ENCODE measurements at regions of chr10 and their contacts with region 1.

Region 1: GRCh38 chr10:6014241-6014761 is 37.0 kb upstream of the IL15RA start:
- DNase-seq: peak; percentile 28 to 88 (median 73)
- ATAC-seq: peak; percentile 99
- H3K4me3 ChIP-seq: no peak overlapping the region
- H3K4me3 Mint-ChIP-seq: peak overlapping the region; percentile 17
- H3K27ac ChIP-seq: peak overlapping the region; percentile 23 to 76
- H3K27ac Mint-ChIP-seq: peak overlapping the region; percentile 96
- H3K4me1 ChIP-seq: peaks cover 13% of the 10 kb centered on the region
- H3K4me1 Mint-ChIP-seq: peaks cover 14% of the 10 kb centered on the region
- H3K27me3 ChIP-seq: no peaks in the 10 kb centered on the region
- H3K27me3 Mint-ChIP-seq: no peaks in the 10 kb centered on the region
- CTCF ChIP-seq: peak; percentile 84

Region 2: GRCh38 chr10:5977471-5978229 is 36.7 kb before region 1 on chr10 and contains the start of gene IL15RA:
- CTCF ChIA-PET with region 1: interaction called, 5 read pairs
- POLR2A ChIA-PET with region 1: interaction called, 3 read pairs
- intact Hi-C with region 1: loop called in 1 of 2 experiments (anchors 2 kb)
- DNase-seq: peak; percentile 54 to 91 (median 84)
- ATAC-seq: peak; percentile 78
- H3K4me3 ChIP-seq: peak within 1 kb of the TSS; percentile 92 to 95
- H3K4me3 Mint-ChIP-seq: peak within 1 kb of the TSS; percentile 97
- H3K27ac ChIP-seq: peak within 1 kb of the TSS; percentile 77 to 82
- H3K27ac Mint-ChIP-seq: peak within 1 kb of the TSS; percentile 96
- H3K4me1 ChIP-seq: peaks cover 12% of the 10 kb centered on the region
- H3K4me1 Mint-ChIP-seq: peaks cover 24% of the 10 kb centered on the region
- H3K27me3 ChIP-seq: no peaks in the 10 kb centered on the region
- H3K27me3 Mint-ChIP-seq: no peaks in the 10 kb centered on the region
- CTCF ChIP-seq: no peak
- total RNA-seq, gene IL15RA: 4.8 to 5.4 TPM

Region 3: GRCh38 chr10:6045314-6045848 is 31.1 kb after region 1 on chr10:
- CTCF ChIA-PET with region 1: interaction called, 78 read pairs
- POLR2A ChIA-PET with region 1: interaction called, 10 read pairs
- intact Hi-C with region 1: loop called in 1 of 2 experiments (anchors 1 kb)
- DNase-seq: peak in 2 of 9 experiments; percentile 43 to 45
- ATAC-seq: no peak
- H3K4me3 ChIP-seq: peak overlapping the region in 1 of 2 experiments; percentile 13
- H3K4me3 Mint-ChIP-seq: peak overlapping the region; percentile 59
- H3K27ac ChIP-seq: no peak overlapping the region
- H3K27ac Mint-ChIP-seq: peak overlapping the region; percentile 32
- H3K4me1 ChIP-seq: peaks cover 46% of the 10 kb centered on the region
- H3K4me1 Mint-ChIP-seq: peaks cover 58% of the 10 kb centered on the region
- H3K27me3 ChIP-seq: no peaks in the 10 kb centered on the region
- H3K27me3 Mint-ChIP-seq: no peaks in the 10 kb centered on the region
- CTCF ChIP-seq: no peak

Region 4: GRCh38 chr10:6062101-6062771 is 47.9 kb after region 1 on chr10 and contains the start of gene IL2RA:
- CTCF ChIA-PET with region 1: interaction called, 14 read pairs
- POLR2A ChIA-PET with region 1: no interaction called
- intact Hi-C with region 1: no loop called
- DNase-seq: peak in 6 of 9 experiments; percentile 49 to 88 (median 60)
- ATAC-seq: peak; percentile 89
- H3K4me3 ChIP-seq: peak within 1 kb of the TSS in 1 of 2 experiments; percentile 24
- H3K4me3 Mint-ChIP-seq: peak within 1 kb of the TSS; percentile 85
- H3K27ac ChIP-seq: no peak within 1 kb of the TSS
- H3K27ac Mint-ChIP-seq: peak within 1 kb of the TSS; percentile 73
- H3K4me1 ChIP-seq: peaks cover 22% of the 10 kb centered on the region
- H3K4me1 Mint-ChIP-seq: peaks cover 56% of the 10 kb centered on the region
- H3K27me3 ChIP-seq: no peaks in the 10 kb centered on the region
- H3K27me3 Mint-ChIP-seq: no peaks in the 10 kb centered on the region
- CTCF ChIP-seq: no peak
- total RNA-seq, gene IL2RA: 1.8 to 2.5 TPM

Region 5: DNA sequence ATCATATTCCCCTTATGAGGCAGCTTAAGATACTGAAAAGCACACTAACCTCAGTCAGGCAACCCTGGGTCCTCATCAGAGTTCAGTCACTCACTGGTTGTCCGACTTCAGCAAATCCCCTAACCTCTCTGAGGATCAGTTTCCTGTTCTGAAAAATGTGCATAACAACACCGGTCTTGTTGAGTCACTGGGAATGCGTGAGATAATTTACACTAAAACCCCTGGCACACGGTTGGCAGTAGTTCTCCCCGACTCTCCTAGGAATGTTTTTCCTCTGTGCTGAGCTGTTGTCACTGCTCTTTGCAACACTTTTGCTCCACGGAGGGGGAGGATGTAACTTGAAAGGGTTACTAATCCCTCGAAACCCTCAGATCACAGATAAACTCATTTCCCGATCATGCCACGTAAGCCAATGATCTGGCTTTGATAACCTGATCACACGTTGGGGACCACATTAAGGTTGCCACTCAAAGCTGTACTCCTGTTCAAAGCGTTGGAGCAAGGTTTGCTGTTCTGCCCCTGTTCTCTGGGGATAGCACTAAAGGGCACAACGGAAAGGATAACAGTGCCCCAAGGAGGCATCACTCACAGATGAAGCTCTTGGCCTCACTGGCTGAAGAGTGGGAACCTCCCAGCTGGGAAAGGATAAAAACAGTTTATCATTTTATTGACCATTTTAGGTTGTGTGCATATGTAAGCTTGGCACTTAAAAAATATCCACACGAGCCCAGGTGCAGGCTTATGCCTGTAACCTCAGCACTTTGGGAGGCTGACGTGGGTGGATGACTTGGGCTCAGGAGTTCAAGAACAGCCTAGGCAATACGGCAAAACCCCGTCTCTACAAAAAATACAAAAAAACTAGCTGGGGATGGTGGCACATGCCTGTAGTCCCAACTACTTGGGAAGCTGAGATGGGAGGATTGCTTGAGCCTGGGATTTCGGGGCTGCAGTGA is 69.5 kb after region 1 on chr10:
- CTCF ChIA-PET with region 1: interaction called, 94 read pairs
- POLR2A ChIA-PET with region 1: interaction called, 5 read pairs
- intact Hi-C with region 1: loop called (anchors 1 kb)
- DNase-seq: peak in 5 of 9 experiments; percentile 17 to 53 (median 42)
- ATAC-seq: no peak
- H3K4me3 ChIP-seq: no peak overlapping the region
- H3K4me3 Mint-ChIP-seq: peak overlapping the region; percentile 40
- H3K27ac ChIP-seq: no peak overlapping the region
- H3K27ac Mint-ChIP-seq: no peak overlapping the region
- H3K4me1 ChIP-seq: peaks cover 28% of the 10 kb centered on the region
- H3K4me1 Mint-ChIP-seq: peaks cover 30% of the 10 kb centered on the region
- H3K27me3 ChIP-seq: no peaks in the 10 kb centered on the region
- H3K27me3 Mint-ChIP-seq: peaks cover 3% of the 10 kb centered on the region
- CTCF ChIP-seq: no peak

Region 6: DNA sequence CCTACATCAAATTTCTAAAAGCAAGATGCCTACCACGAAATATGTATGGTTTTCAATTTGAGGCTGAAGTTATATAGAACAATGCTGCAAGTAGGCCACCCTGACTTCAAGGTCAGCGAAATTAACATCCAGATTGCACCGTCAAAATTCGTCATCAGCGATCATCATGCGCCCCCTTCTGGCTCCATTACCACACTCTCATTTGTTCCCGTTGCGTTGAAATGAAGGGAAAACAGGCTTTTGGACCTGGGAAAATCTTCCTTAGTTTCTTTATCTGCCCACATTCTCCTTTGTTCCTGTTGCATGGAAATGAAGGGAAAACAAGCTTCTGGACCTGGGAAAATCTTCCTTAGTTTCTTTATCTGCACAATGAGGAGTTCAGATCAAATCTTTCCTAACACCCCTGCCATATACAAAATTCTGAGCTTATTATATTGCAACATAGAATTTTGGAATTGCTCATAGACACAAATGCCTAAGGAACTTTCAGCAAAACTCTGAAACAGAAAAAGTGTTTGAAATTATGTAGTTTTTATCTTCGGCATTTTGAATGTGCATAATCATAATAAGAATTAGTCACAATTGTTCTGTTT is 664.0 kb after region 1 on chr10:
- CTCF ChIA-PET with region 1: no interaction called
- POLR2A ChIA-PET with region 1: no interaction called
- intact Hi-C with region 1: loop called in 1 of 2 experiments (anchors 10 kb)
- DNase-seq: peak; percentile 23 to 78 (median 68)
- ATAC-seq: peak; percentile 52
- H3K4me3 ChIP-seq: no peak overlapping the region
- H3K4me3 Mint-ChIP-seq: no peak overlapping the region
- H3K27ac ChIP-seq: no peak overlapping the region
- H3K27ac Mint-ChIP-seq: no peak overlapping the region
- H3K4me1 ChIP-seq: no peaks in the 10 kb centered on the region
- H3K4me1 Mint-ChIP-seq: peaks cover 4% of the 10 kb centered on the region
- H3K27me3 ChIP-seq: no peaks in the 10 kb centered on the region
- H3K27me3 Mint-ChIP-seq: no peaks in the 10 kb centered on the region
- CTCF ChIP-seq: peak; percentile 71